Ascending aorta (tissue), 2 donors: ENCODE measurements at regions of chr6 and their contacts with region 1.

Region 1: DNA sequence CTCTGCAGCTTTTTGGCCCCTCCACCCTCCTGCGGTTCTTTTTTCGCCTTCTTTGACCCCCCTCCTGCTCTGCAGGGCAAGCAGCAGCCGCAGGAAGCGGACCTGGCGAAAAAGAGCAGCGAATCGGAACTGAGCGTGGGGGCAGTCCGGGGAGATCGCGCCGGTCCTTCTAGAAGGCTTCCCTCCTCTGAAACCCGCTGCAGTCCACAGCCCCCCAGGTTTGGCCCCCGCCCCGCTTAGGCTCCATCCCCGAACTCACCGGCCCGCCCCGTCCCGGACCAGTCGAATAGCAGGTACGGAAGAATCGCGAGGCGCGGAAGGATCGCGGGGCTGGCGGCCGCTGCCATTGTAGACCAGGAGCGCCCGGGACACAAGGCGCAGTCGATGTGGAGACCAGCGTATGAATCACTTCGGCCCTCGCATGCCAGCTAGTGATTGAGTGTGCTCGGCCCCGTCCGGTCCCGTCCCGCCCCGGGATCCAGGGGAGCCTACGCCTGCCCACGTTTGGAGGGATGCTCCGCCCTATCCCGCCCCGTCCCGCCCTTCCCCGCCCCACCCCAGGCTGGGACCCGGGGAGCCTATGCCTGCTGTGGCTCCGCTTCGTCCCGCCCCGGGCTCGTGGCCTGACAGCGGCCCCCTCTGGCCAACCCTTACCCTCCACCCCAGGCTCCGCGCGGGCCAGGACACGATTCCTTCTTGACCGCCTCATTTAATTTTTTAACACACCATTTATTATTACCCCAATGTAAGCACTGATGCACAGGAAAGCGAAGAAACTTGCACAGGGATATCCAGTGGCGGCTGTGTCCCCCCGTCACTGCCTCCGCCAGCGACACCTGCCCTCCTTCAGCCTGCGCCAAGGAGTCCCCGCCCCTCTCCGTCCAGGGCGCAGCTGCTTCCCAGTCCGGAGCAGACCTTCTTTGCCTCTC is at the start of gene ULBP3:
- DNase-seq: peak; percentile 70 to 95
- H3K4me3 ChIP-seq: peak within 1 kb of the TSS; percentile 63 to 88
- H3K27ac ChIP-seq: peak within 1 kb of the TSS; percentile 76 to 80
- H3K4me1 ChIP-seq: peaks cover 0 to 5% of the 10 kb centered on the region in 2 donors
- H3K27me3 ChIP-seq: no peaks in the 10 kb centered on the region
- CTCF ChIP-seq: peak in 2 of 3 experiments; percentile 69 to 72
- total RNA-seq, gene ULBP3: 24.2 TPM

Region 2: DNA sequence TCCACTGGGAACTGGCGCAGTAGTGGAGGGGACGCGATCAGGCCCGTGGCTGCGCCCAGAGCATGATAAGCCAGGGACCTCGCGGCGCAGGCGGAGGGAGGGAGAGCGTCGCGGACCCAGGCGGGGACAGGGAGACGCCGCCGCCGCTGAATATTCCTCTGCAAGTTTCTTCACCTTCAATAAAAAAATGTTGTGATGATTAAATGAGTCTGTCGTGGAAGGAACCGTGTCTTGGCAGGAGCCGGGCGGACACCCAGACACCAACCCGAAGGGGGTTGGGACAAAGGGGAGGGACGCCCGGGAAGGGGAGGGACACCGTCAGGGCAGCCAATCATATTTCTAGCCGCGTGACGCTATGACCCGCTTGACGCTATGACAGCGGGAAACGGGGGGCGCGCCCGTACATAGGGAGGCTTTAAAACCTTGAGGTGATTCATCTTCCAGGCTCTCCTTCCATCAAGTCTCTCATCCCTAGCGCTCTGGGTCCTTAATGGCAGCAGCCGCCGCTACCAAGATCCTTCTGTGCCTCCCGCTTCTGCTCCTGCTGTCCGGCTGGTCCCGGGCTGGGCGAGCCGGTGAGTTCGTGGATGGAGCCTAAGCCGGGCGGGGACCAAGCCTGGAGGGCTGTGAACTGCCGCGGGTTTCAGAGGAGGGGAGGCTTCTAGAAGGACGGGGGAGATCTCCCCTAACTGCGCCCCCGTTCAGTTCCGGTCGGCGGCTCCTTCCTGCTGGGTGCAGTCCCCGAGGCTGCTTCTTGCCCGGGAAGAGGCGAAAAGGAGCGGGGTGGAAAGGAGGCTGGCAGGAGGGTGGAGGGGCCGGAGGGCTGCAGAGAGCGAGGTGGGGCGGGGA is 127.2 kb before region 1 on chr6 and contains the start of gene ULBP2:
- intact Hi-C with region 1: loop called (anchors 5 kb)
- DNase-seq: peak; percentile 74 to 93
- H3K4me3 ChIP-seq: peak within 1 kb of the TSS; percentile 47 to 65
- H3K27ac ChIP-seq: no peak within 1 kb of the TSS
- H3K4me1 ChIP-seq: peaks cover 0 to 21% of the 10 kb centered on the region in 2 donors
- H3K27me3 ChIP-seq: peaks cover 28% of the 10 kb centered on the region
- CTCF ChIP-seq: no peak
- total RNA-seq, gene ULBP2: not detected

Region 3: DNA sequence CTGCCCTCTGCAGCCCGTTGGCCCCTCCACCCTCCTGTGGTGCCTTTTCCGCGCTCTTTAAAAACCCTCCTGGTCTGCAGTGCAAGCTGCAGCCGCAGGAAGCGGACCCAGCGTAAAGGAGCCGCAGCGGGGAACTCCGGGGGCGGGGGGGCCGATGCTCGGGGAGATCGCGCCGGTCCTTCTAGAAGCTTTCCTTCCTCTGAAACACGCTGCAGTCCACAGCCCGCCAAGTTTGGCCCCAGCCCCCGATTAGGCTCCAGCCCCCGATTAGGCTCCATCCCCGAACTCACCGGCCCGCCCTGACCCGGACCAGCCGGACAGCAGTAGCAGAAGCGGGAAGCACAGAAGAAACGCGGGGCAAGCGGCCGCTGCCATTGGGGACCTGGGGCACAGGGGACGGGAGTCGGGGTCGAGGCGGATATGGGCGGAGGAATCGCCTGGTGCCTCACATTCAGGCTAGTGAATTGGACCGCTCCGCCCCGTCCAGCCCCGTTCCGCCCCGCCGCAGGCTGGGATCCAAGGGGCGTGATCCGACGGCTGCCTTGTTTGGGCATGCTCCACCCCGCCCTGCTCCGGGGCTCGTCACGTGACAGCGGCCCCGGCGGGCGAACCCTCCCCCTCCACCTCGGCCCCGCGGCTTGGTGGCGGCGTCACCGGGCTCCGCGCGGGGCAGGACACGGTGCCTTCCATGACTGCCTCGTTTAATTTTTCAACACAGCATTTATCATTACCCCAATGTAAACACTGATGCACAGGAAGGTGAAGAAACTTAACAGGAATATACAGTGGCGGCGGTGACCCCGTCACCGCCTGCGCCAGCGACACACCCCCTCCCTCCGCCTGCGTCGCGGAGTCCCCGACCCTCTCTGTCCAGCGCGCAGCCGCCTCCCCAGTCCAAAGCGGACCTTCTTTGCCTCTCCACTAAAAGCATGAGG is 63.9 kb before region 1 on chr6:
- intact Hi-C with region 1: loop called (anchors 5 kb)
- DNase-seq: peak; percentile 77 to 95
- H3K4me3 ChIP-seq: peak overlapping the region; percentile 45 to 78
- H3K27ac ChIP-seq: no peak overlapping the region
- H3K4me1 ChIP-seq: peaks cover 4 to 11% of the 10 kb centered on the region in 2 donors
- H3K27me3 ChIP-seq: peaks cover 11% of the 10 kb centered on the region
- CTCF ChIP-seq: no peak

Region 4: DNA sequence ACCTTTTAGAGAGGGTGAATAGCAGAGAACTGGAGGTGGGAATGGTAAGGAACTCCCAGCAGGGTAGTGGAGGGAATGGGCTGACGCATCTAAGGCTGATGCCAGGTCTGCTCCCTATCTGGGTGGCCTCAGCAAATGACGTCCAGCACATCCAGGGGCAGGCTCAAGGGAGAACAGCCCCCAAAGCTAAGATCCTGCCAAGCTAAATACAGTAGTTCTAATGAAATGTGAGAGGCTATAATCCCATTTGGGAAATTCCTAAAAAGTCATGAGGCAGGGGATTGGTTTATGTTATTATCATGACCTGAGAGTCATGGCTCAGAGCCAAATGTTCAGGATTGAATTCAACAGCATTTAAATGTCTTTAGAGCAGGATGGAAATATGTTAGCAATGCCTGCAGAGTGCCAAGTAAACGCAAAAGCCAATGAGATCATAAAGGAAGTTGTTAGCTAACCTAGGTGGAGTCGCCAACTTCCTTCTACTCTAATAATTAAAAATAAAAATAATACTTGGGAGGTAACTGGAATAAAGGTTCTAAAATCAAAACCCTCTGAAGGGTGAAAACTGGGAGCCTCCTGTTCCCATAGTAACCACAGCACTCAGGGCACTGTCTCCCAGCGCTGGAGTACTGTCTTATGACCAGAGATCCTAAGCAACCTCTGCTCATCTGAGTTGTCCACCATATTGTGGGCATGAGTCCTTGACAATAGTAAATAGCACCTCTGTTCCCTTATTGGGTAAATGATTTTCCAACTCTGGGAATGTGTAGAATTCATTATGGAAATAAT is 334.7 kb after region 1 on chr6:
- intact Hi-C with region 1: loop called (anchors 5 kb)
- DNase-seq: peak in 1 of 2 donors; percentile 83
- H3K4me3 ChIP-seq: no peak overlapping the region
- H3K27ac ChIP-seq: peak overlapping the region; percentile 5 to 19
- H3K4me1 ChIP-seq: peaks cover 7 to 10% of the 10 kb centered on the region in 2 donors
- H3K27me3 ChIP-seq: no peaks in the 10 kb centered on the region
- CTCF ChIP-seq: no peak